B cell (primary cell): ENCODE measurements at regions of chr19 and their contacts with region 1.

Region 1: GRCh38 chr19:10701955-10702525 is 801 bp downstream of the QTRT1 start:
- DNase-seq: peak; percentile 53
- ATAC-seq: peak; percentile 34
- H3K4me3 ChIP-seq: peak overlapping the region; percentile 51 to 96 (median 88)
- H3K4me3 Mint-ChIP-seq: peak overlapping the region; percentile 98
- H3K27ac ChIP-seq: peak overlapping the region in 1 of 2 donors; percentile 66
- H3K27ac Mint-ChIP-seq: peak overlapping the region; percentile 93
- H3K4me1 ChIP-seq: peaks cover 5 to 14% of the 10 kb centered on the region in 2 donors
- H3K4me1 Mint-ChIP-seq: peaks cover 12% of the 10 kb centered on the region
- H3K27me3 ChIP-seq: no peaks in the 10 kb centered on the region
- H3K27me3 Mint-ChIP-seq: no peaks in the 10 kb centered on the region
- CTCF ChIP-seq: no peak

Region 2: GRCh38 chr19:10543420-10544241 is 158.4 kb before region 1 on chr19 and contains the start of gene ATG4D:
- CTCF ChIA-PET with region 1: interaction called, 12 read pairs
- POLR2A ChIA-PET with region 1: no interaction called
- intact Hi-C with region 1: no loop called
- DNase-seq: peak; percentile 88
- ATAC-seq: peak; percentile 82
- H3K4me3 ChIP-seq: peak within 1 kb of the TSS; percentile 27 to 88 (median 75)
- H3K4me3 Mint-ChIP-seq: peak within 1 kb of the TSS; percentile 89
- H3K27ac ChIP-seq: peak within 1 kb of the TSS; percentile 34 to 85
- H3K27ac Mint-ChIP-seq: peak within 1 kb of the TSS; percentile 87
- H3K4me1 ChIP-seq: peaks cover 12 to 19% of the 10 kb centered on the region in 2 donors
- H3K4me1 Mint-ChIP-seq: peaks cover 16% of the 10 kb centered on the region
- H3K27me3 ChIP-seq: peaks cover 0 to 5% (median 0%) of the 10 kb centered on the region in 4 experiments
- H3K27me3 Mint-ChIP-seq: peaks cover 6% of the 10 kb centered on the region
- CTCF ChIP-seq: no peak
- total RNA-seq, gene ATG4D: 58.8 and 59.2 TPM in 2 replicates

Region 3: GRCh38 chr19:10622906-10623305 is 79.1 kb before region 1 on chr19:
- CTCF ChIA-PET with region 1: no interaction called
- POLR2A ChIA-PET with region 1: no interaction called
- intact Hi-C with region 1: no loop called
- DNase-seq: no peak
- ATAC-seq: no peak
- H3K4me3 ChIP-seq: no peak overlapping the region
- H3K4me3 Mint-ChIP-seq: no peak overlapping the region
- H3K27ac ChIP-seq: no peak overlapping the region
- H3K27ac Mint-ChIP-seq: no peak overlapping the region
- H3K4me1 ChIP-seq: peaks cover 6 to 35% of the 10 kb centered on the region in 2 donors
- H3K4me1 Mint-ChIP-seq: peaks cover 37% of the 10 kb centered on the region
- H3K27me3 ChIP-seq: no peaks in the 10 kb centered on the region
- H3K27me3 Mint-ChIP-seq: no peaks in the 10 kb centered on the region
- CTCF ChIP-seq: no peak

Region 4: GRCh38 chr19:10730923-10731322 is 28.9 kb after region 1 on chr19:
- CTCF ChIA-PET with region 1: interaction called, 3 read pairs
- POLR2A ChIA-PET with region 1: interaction called, 3 read pairs
- intact Hi-C with region 1: loop called (anchors 1 kb)
- DNase-seq: peak; percentile 48
- ATAC-seq: peak; percentile 23
- H3K4me3 ChIP-seq: no peak overlapping the region
- H3K4me3 Mint-ChIP-seq: peak overlapping the region; percentile 84
- H3K27ac ChIP-seq: peak overlapping the region; percentile 63 to 82
- H3K27ac Mint-ChIP-seq: peak overlapping the region; percentile 85
- H3K4me1 ChIP-seq: peaks cover 39 to 60% of the 10 kb centered on the region in 2 donors
- H3K4me1 Mint-ChIP-seq: peaks cover 52% of the 10 kb centered on the region
- H3K27me3 ChIP-seq: no peaks in the 10 kb centered on the region
- H3K27me3 Mint-ChIP-seq: no peaks in the 10 kb centered on the region
- CTCF ChIP-seq: no peak

Region 5: GRCh38 chr19:10820173-10820572 is 118.1 kb after region 1 on chr19:
- CTCF ChIA-PET with region 1: interaction called, 10 read pairs
- POLR2A ChIA-PET with region 1: no interaction called
- intact Hi-C with region 1: no loop called
- DNase-seq: no peak
- ATAC-seq: no peak
- H3K4me3 ChIP-seq: no peak overlapping the region
- H3K4me3 Mint-ChIP-seq: no peak overlapping the region
- H3K27ac ChIP-seq: no peak overlapping the region
- H3K27ac Mint-ChIP-seq: peak overlapping the region; percentile 43
- H3K4me1 ChIP-seq: no peaks in the 10 kb centered on the region
- H3K4me1 Mint-ChIP-seq: no peaks in the 10 kb centered on the region
- H3K27me3 ChIP-seq: no peaks in the 10 kb centered on the region
- H3K27me3 Mint-ChIP-seq: no peaks in the 10 kb centered on the region
- CTCF ChIP-seq: no peak

Region 6: GRCh38 chr19:10864538-10864899 is 162.5 kb after region 1 on chr19:
- CTCF ChIA-PET with region 1: interaction called, 27 read pairs
- POLR2A ChIA-PET with region 1: no interaction called
- intact Hi-C with region 1: no loop called
- DNase-seq: peak; percentile 81
- ATAC-seq: peak; percentile 69
- H3K4me3 ChIP-seq: no peak overlapping the region
- H3K4me3 Mint-ChIP-seq: no peak overlapping the region
- H3K27ac ChIP-seq: no peak overlapping the region
- H3K27ac Mint-ChIP-seq: peak overlapping the region; percentile 38
- H3K4me1 ChIP-seq: peaks cover 21 to 31% of the 10 kb centered on the region in 2 donors
- H3K4me1 Mint-ChIP-seq: peaks cover 34% of the 10 kb centered on the region
- H3K27me3 ChIP-seq: no peaks in the 10 kb centered on the region
- H3K27me3 Mint-ChIP-seq: no peaks in the 10 kb centered on the region
- CTCF ChIP-seq: peak; percentile 83